Activated B cell treated with CpG ODN at 0.5 μM for 24 hours (primary cell): ENCODE measurements at regions of chr11 and their contacts with region 1.

Region 1: DNA sequence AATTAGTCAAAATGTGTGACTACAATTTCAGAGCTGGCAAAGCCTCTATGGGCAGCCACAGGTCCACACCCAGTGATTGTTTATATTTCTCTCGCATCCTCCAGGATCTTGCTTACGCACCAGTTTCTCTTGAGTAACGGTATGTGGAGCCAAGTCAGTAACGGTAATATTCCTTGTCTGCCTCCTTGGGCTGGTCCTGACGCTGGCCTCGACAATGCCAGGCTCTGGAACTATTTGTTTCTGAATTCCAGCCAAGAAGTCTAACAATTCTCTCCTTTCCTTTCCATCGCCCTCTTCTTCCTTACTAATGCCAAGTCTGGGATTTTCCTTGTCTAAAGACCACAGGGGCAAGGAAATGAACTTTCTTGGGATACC is 10.0 kb upstream of the NUP160 start:
- DNase-seq: no peak
- ATAC-seq: no peak
- H3K4me3 Mint-ChIP-seq: peak overlapping the region; percentile 66
- H3K27ac Mint-ChIP-seq: peak overlapping the region; percentile 95
- H3K4me1 Mint-ChIP-seq: peaks cover 89% of the 10 kb centered on the region
- H3K27me3 Mint-ChIP-seq: no peaks in the 10 kb centered on the region
- CTCF ChIP-seq: no peak

Region 2: GRCh38 chr11:47509077-47509536 is 349.0 kb before region 1 on chr11:
- CTCF ChIA-PET with region 1: no interaction called
- POLR2A ChIA-PET with region 1: no interaction called
- intact Hi-C with region 1: loop called (anchors 10 kb)
- DNase-seq: no peak
- ATAC-seq: no peak
- H3K4me3 Mint-ChIP-seq: peak overlapping the region; percentile 49
- H3K27ac Mint-ChIP-seq: peak overlapping the region; percentile 54
- H3K4me1 Mint-ChIP-seq: peaks cover 83% of the 10 kb centered on the region
- H3K27me3 Mint-ChIP-seq: no peaks in the 10 kb centered on the region
- CTCF ChIP-seq: no peak

Region 3: GRCh38 chr11:47786373-47786772 is 71.8 kb before region 1 on chr11:
- CTCF ChIA-PET with region 1: no interaction called
- POLR2A ChIA-PET with region 1: no interaction called
- intact Hi-C with region 1: no loop called
- DNase-seq: no peak
- ATAC-seq: no peak
- H3K4me3 Mint-ChIP-seq: no peak overlapping the region
- H3K27ac Mint-ChIP-seq: no peak overlapping the region
- H3K4me1 Mint-ChIP-seq: no peaks in the 10 kb centered on the region
- H3K27me3 Mint-ChIP-seq: no peaks in the 10 kb centered on the region
- CTCF ChIP-seq: no peak

Region 4: DNA sequence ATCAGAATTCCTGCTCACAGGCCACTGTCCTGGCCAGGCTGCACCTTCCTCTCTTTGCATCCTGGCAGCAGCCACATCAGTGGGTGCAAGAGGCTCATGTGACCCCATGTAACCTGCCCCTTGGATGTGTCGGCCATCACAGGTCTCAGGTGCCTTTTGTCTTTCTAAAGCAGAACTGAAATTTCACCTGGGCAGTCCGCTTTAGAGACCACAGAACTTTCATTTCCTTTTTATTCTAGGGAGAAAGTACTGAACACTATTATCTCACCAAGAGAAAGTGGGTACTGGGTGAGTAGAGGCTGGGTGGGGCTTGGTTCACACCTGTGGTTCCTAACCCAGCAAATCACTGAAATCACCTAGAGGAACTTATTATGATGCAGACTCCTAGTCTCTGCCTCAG is 41.6 kb after region 1 on chr11:
- CTCF ChIA-PET with region 1: no interaction called
- POLR2A ChIA-PET with region 1: interaction called, 7 read pairs
- intact Hi-C with region 1: loop called (anchors 1 kb)
- DNase-seq: no peak
- ATAC-seq: peak; percentile 94
- H3K4me3 Mint-ChIP-seq: no peak overlapping the region
- H3K27ac Mint-ChIP-seq: peak overlapping the region; percentile 83
- H3K4me1 Mint-ChIP-seq: peaks cover 48% of the 10 kb centered on the region
- H3K27me3 Mint-ChIP-seq: no peaks in the 10 kb centered on the region
- CTCF ChIP-seq: no peak

Region 5: GRCh38 chr11:47950396-47950795 is 92.2 kb after region 1 on chr11:
- CTCF ChIA-PET with region 1: interaction called, 3 read pairs
- POLR2A ChIA-PET with region 1: interaction called, 5 read pairs
- intact Hi-C with region 1: loop called (anchors 1 kb)
- DNase-seq: peak; percentile 47
- ATAC-seq: peak; percentile 97
- H3K4me3 Mint-ChIP-seq: peak overlapping the region; percentile 26
- H3K27ac Mint-ChIP-seq: peak overlapping the region; percentile 79
- H3K4me1 Mint-ChIP-seq: peaks cover 54% of the 10 kb centered on the region
- H3K27me3 Mint-ChIP-seq: no peaks in the 10 kb centered on the region
- CTCF ChIP-seq: no peak